Posterior vena cava (tissue), 2 donors: ENCODE measurements at regions of chr5 and their contacts with region 1.

Region 1: GRCh38 chr5:132500931-132501630 is 10.5 kb upstream of the IRF1 start:
- DNase-seq: no peak

Region 2: DNA sequence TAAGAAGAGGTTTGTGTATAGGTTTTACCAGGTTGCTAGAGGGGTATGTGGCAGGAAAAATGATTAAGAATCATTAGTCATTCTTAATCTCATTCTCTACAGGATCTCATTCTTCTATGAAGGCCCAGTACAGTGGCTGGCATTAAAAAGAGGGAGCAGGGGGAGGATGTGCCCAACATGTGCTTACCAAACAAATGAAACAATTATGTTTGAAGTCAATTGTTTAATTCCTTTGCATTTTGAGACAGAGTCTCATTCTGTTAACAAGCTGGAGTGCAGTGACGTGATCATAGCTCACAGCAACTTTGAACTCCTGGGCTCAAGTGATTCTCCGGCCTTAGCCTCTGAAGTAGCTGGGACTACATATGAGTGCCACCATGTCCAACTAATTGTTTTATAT is 727.3 kb before region 1 on chr5:
- intact Hi-C with region 1: no loop called
- DNase-seq: no peak

Region 3: DNA sequence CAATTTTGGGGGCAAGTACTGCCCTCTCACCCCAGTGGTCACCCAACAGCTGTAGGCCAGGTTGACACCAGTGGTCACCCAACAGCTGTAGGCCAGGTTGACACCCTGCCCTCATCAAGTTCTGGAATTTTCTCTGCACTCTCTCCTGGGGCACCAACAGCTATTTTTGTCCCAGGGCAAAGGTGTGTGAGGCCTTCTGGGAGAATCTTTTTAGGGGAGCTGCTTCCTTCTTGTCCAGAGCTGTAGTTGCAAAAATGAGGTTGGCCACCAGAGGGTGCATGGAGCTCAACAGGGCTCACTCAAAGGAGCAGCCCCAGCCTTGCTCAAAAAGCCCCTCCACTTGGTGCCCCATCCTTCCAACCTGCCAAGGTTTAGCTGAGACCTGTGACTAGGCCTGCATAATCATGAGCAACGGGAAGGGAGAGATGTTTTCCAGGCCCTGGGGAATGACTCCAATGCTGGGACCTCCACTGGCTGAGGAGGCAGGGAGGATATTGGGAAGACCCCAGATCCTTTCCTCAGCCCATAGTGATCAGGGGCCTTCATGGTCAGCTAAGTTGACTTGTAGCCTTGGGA is 262.8 kb before region 1 on chr5:
- intact Hi-C with region 1: loop called in 1 of 2 experiments (anchors 5 kb)
- DNase-seq: peak; percentile 88

Region 4: DNA sequence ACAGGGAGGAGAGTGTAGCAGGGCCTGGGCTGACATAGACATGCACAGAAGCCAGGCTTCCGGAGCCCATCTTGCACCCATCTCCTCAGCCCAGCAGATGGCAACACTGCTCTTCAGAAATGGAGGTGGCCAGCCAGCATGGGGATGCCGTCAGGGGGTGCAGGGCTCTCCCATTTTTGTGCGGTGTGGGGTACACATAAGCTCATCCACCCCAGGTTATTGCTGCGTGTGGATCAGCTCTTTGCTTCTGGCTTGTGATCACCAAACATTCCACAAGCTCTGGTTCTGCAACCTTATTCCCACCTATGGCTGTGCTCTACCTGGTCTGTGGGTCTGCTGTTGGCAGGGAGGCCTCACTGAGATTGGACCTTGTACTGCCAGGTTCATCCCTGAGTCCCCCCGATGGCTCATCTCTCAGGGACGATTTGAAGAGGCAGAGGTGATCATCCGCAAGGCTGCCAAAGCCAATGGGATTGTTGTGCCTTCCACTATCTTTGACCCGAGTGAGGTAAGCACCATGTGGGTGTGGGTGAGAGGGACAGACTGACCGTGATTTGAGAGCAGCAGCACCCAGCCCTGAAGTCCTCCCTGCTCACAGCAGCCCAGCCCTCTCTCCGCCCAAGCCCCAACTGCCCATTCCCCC is 114.3 kb before region 1 on chr5:
- intact Hi-C with region 1: loop called (anchors 2 to 10 kb)
- DNase-seq: peak; percentile 92